ENCODE measurements at regions of chr18 and their contacts with region 1.

Region 1: DNA sequence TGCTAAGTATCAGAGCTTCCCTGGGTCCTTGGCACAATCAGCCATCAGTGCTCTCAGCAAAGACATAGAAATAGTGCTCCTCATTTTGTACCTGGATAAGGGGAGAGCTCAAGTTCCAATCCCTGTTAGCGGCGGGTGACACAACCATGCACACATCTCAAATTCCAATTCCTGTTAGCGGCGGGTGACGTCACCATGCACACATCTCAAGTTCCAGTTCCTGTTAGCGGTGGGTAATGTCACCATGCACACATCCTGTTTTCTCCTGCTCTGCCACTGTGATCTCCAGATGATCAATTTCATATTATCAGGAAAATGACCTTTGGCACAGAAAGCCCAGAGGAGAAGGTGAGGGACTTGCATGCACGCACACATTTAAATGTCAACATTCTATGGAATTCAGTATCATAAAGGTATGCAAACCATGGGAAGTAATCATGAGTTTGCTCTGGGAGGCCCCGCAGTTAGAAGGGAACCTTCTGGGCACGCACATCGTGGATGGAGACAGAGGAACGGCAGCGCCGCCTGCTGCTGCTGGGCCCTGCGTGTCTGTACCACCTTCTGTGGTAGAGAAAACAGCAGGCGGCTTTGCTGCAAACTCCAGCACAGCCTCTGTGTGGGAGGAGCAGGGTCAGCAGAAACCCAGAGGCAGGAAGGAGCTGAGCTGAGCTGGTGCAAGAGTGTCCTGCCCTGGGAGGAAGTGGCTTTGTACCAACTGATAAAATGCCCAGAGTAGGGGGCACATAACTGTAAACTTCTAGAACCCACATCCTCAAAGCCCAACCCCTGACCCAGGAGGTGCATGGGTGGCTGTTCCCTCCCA is 77.8 kb downstream of the MBP start:
- DNase-seq: peak; percentile 96
- H3K4me3 ChIP-seq: no peak overlapping the region
- H3K27ac ChIP-seq: peak overlapping the region; percentile 96
- H3K27me3 ChIP-seq: no peaks in the 10 kb centered on the region
- CTCF ChIP-seq: peak; percentile 96

Region 2: GRCh38 chr18:76643996-76644395 is 410.8 kb before region 1 on chr18:
- in situ Hi-C with region 1: no loop called
- DNase-seq: no peak
- H3K4me3 ChIP-seq: no peak overlapping the region
- H3K27ac ChIP-seq: no peak overlapping the region
- H3K27me3 ChIP-seq: no peaks in the 10 kb centered on the region
- CTCF ChIP-seq: no peak

Region 3: GRCh38 chr18:77207540-77207939 is 152.7 kb after region 1 on chr18:
- in situ Hi-C with region 1: loop called (anchors 25 kb)
- DNase-seq: peak; percentile 76
- H3K4me3 ChIP-seq: no peak overlapping the region
- H3K27ac ChIP-seq: peak overlapping the region; percentile 90
- H3K27me3 ChIP-seq: no peaks in the 10 kb centered on the region
- CTCF ChIP-seq: peak; percentile 83

Measured in brain microvascular endothelial cell (primary cell).